ENCODE measurements at regions of chr2 and their contacts with region 1.

Region 1: GRCh38 chr2:202178342-202178958 is 59.9 kb downstream of the SUMO1 start:
- DNase-seq: peak; percentile 31
- H3K4me3 Mint-ChIP-seq: no peak overlapping the region
- H3K27ac Mint-ChIP-seq: no peak overlapping the region
- H3K4me1 Mint-ChIP-seq: peaks cover 12% of the 10 kb centered on the region
- H3K27me3 Mint-ChIP-seq: peaks cover 4% of the 10 kb centered on the region

Region 2: DNA sequence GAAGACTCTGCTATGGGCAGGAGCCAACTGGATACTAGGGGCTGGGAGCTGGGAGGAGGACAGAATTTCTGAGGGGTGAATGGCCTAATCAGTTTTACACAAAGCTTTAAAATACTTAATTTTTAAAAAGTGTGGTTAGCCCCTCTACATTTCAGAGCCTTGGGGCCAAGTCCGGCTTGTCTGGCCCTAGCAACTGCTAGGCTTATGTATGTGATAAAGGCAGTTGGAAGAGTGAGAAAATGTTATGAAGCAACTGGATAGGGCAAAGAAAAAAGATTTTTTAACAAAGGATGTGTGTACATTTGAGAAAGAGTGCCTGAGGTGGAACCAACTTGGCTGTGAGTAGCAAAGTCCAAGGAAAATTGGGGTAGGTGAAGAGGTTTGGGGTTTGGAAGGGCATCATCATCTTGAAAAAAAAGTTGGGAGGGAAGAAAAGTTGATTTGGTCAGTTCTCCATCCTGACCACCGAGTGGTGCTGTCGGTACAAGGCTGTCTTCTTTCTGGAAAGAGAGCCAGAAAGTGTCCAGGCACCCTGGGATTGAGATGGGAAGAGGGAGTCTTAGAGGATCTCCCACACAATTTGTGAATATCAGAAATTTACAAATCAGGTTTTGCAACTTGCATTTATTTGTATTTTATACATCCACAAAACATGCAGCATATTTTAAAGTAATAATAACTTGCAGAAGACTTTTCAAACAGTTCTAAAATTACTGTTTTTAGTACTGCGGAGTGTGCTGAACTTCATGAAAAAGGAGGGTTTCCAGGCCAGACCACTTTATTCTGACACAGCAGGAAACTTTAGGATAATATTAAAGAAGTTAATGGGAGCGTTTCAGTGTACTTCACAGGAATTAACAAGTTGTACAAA is 382.6 kb before region 1 on chr2:
- intact Hi-C with region 1: loop called (anchors 5 kb)
- DNase-seq: no peak
- H3K4me3 Mint-ChIP-seq: no peak overlapping the region
- H3K27ac Mint-ChIP-seq: no peak overlapping the region
- H3K4me1 Mint-ChIP-seq: no peaks in the 10 kb centered on the region
- H3K27me3 Mint-ChIP-seq: peaks cover 8% of the 10 kb centered on the region

Region 3: GRCh38 chr2:201860636-201861066 is 317.8 kb before region 1 on chr2:
- intact Hi-C with region 1: loop called (anchors 1 kb)
- DNase-seq: peak; percentile 10
- H3K4me3 Mint-ChIP-seq: no peak overlapping the region
- H3K27ac Mint-ChIP-seq: no peak overlapping the region
- H3K4me1 Mint-ChIP-seq: peaks cover 18% of the 10 kb centered on the region
- H3K27me3 Mint-ChIP-seq: peaks cover 37% of the 10 kb centered on the region

Region 4: GRCh38 chr2:202104278-202104870 is 74.1 kb before region 1 on chr2:
- intact Hi-C with region 1: loop called (anchors 1 kb)
- DNase-seq: peak; percentile 8
- H3K4me3 Mint-ChIP-seq: no peak overlapping the region
- H3K27ac Mint-ChIP-seq: no peak overlapping the region
- H3K4me1 Mint-ChIP-seq: no peaks in the 10 kb centered on the region
- H3K27me3 Mint-ChIP-seq: peaks cover 11% of the 10 kb centered on the region